ENCODE measurements at regions of chr18 and their contacts with region 1.

Region 1: GRCh38 chr18:58831606-58832005 is 33.1 kb upstream of the ZNF532 start:
- DNase-seq: no peak
- H3K4me3 ChIP-seq: no peak overlapping the region
- H3K27ac ChIP-seq: no peak overlapping the region
- H3K4me1 ChIP-seq: no peaks in the 10 kb centered on the region
- H3K27me3 ChIP-seq: no peaks in the 10 kb centered on the region
- CTCF ChIP-seq: no peak
- POLR2A ChIP-seq: no peak

Region 2: GRCh38 chr18:58850784-58851469 is 19.3 kb after region 1 on chr18:
- intact Hi-C with region 1: loop called (anchors 2 kb)
- DNase-seq: no peak
- H3K4me3 ChIP-seq: no peak overlapping the region
- H3K27ac ChIP-seq: peak overlapping the region in 1 of 2 donors; percentile 5
- H3K4me1 ChIP-seq: no peaks in the 10 kb centered on the region
- H3K27me3 ChIP-seq: no peaks in the 10 kb centered on the region
- CTCF ChIP-seq: no peak
- POLR2A ChIP-seq: no peak